CD4-positive, alpha-beta T cell (primary cell): ENCODE measurements at regions of chr2 and their contacts with region 1.

Region 1: GRCh38 chr2:190534310-190535120 is at the start of gene NEMP2:
- DNase-seq: peak; percentile 53 to 91 (median 76)
- ATAC-seq: peak; percentile 59
- H3K4me3 ChIP-seq: peak within 1 kb of the TSS; percentile 77
- H3K4me3 Mint-ChIP-seq: peak within 1 kb of the TSS; percentile 94
- H3K27ac ChIP-seq: peak within 1 kb of the TSS; percentile 87 to 95
- H3K27ac Mint-ChIP-seq: peak within 1 kb of the TSS; percentile 99
- H3K4me1 ChIP-seq: peaks cover 40% of the 10 kb centered on the region
- H3K4me1 Mint-ChIP-seq: peaks cover 73% of the 10 kb centered on the region
- H3K27me3 ChIP-seq: no peaks in the 10 kb centered on the region
- H3K27me3 Mint-ChIP-seq: no peaks in the 10 kb centered on the region
- CTCF ChIP-seq: no peak
- total RNA-seq, gene NEMP2: 11.6 to 12.2 TPM

Region 2: GRCh38 chr2:189927823-189928419 is 606.6 kb before region 1 on chr2:
- CTCF ChIA-PET with region 1: no interaction called
- POLR2A ChIA-PET with region 1: no interaction called
- intact Hi-C with region 1: no loop called
- DNase-seq: no peak
- ATAC-seq: no peak
- H3K4me3 ChIP-seq: no peak overlapping the region
- H3K4me3 Mint-ChIP-seq: no peak overlapping the region
- H3K27ac ChIP-seq: no peak overlapping the region
- H3K27ac Mint-ChIP-seq: no peak overlapping the region
- H3K4me1 ChIP-seq: no peaks in the 10 kb centered on the region
- H3K4me1 Mint-ChIP-seq: no peaks in the 10 kb centered on the region
- H3K27me3 ChIP-seq: no peaks in the 10 kb centered on the region
- H3K27me3 Mint-ChIP-seq: peaks cover 4% of the 10 kb centered on the region
- CTCF ChIP-seq: no peak

Region 3: DNA sequence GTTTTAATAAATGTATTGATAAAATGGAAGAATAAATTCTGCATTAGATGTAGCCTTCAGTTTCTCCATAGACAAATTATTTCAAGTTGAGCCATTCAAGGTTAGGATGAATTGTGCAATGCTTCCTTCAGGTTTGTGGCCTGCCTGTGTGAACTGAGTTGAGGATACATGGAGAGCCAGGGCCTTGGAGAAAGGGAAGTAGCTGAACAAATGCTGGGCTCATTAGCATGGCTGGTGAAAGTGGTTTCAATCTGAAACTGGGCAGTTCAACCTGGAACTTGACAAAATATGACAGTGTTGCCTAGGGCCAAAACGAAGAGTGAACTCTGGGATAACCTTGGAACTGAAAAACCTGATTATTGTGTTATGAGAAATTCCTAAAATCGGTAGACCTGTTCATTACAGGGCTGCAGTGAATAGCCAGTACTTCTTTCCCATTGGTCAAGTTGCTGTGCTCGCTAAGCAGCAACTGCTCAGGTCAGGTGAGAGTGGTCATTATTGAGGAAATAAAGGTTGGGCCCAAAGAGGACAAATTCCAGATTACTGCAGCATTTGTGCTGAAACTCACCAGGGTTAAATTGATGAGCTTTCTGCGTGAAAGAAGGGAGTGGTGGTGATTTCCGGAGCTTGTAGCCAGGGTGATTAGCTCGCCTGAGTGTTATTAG is 178.4 kb before region 1 on chr2:
- CTCF ChIA-PET with region 1: no interaction called
- POLR2A ChIA-PET with region 1: interaction called, 10 read pairs
- intact Hi-C with region 1: no loop called
- DNase-seq: no peak
- ATAC-seq: no peak
- H3K4me3 ChIP-seq: no peak overlapping the region
- H3K4me3 Mint-ChIP-seq: no peak overlapping the region
- H3K27ac ChIP-seq: no peak overlapping the region
- H3K27ac Mint-ChIP-seq: no peak overlapping the region
- H3K4me1 ChIP-seq: peaks cover 3% of the 10 kb centered on the region
- H3K4me1 Mint-ChIP-seq: peaks cover 18% of the 10 kb centered on the region
- H3K27me3 ChIP-seq: no peaks in the 10 kb centered on the region
- H3K27me3 Mint-ChIP-seq: no peaks in the 10 kb centered on the region
- CTCF ChIP-seq: no peak

Region 4: DNA sequence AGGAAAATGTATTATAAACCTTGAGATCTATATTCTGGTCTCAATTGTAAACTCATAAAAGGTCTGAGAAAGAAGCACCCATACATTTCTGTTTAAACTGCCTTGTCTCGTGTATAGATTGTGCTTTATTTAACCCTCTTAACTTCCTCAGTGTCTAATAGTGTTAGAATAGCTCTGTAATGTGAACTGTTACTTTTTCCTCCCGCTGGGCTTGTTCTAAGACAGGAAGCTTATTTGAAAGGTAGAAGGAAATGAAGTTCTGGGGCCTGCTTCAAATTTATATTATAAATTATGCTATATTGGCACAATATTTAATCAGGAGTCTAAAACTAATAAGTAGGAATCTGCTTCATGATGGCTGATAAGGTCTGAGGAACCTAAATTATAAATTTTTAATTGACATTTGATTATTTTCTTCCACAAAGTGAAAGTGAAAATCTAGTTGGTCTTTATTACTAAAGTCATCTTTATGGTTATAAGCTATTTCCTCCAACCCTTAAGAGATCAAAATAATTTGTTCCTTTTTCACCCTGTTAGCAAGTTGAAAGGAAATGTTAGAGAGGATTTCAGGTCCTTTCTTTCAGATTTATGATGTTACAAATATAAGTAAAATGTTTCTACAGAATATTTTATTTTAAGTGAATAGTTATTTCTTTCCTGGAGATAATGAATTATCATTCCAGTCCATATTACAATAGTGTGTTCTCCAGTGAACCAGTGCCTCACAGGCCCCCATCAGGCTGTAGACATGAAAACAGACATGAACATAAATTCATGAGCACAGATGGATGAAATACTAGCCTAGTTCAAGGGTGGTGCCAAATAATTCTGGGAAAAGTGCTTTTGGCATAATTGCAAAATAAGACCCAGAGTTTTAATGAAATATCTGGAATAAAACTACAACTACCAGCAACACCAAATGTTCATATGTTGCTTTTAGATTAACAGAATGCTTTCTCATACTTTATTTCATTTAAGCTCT is 118.4 kb before region 1 on chr2:
- CTCF ChIA-PET with region 1: no interaction called
- POLR2A ChIA-PET with region 1: interaction called, 100 read pairs
- intact Hi-C with region 1: no loop called
- DNase-seq: peak in 2 of 14 experiments; percentile 28 to 48
- ATAC-seq: peak; percentile 71
- H3K4me3 ChIP-seq: no peak overlapping the region
- H3K4me3 Mint-ChIP-seq: peak overlapping the region; percentile 30
- H3K27ac ChIP-seq: peak overlapping the region; percentile 34 to 75
- H3K27ac Mint-ChIP-seq: peak overlapping the region; percentile 78
- H3K4me1 ChIP-seq: peaks cover 30% of the 10 kb centered on the region
- H3K4me1 Mint-ChIP-seq: peaks cover 96% of the 10 kb centered on the region
- H3K27me3 ChIP-seq: no peaks in the 10 kb centered on the region
- H3K27me3 Mint-ChIP-seq: no peaks in the 10 kb centered on the region
- CTCF ChIP-seq: no peak

Region 5: DNA sequence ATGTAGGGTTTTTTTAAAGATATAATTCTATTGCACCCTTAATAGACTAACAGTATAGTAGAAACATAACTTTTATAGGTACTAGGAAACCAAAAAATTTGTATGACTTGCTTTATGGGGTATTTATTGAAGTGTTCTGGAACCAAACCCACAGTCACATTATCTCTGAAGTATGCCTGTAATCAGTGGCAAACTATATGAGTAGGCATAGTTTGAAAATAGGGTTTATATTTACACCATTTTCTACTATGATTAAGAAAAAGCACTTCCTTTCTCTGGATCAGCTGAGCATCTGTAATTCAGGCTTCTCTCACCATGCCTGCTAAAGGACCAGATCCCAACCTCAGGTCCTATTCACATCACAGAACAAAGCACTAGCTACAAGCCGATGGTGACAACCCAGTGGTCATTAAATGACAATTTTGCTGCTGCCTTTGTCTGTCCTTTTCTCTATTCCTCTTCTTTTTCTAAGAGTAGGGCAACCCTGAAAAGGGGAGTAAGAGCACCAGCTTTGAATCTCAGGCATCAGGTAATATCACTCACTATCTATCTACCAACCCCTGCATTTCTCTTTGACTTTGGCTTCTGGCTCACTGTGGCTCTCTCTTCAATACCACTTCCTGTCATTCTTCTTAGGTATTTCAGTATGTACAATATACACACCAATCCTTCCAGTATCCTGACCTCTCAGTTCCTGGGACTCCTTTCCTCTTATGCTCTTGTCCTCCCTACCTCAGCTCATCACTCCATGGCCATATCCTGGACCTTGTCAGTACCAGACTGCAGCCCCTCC is 14.3 kb before region 1 on chr2:
- CTCF ChIA-PET with region 1: no interaction called
- POLR2A ChIA-PET with region 1: interaction called, 49 read pairs
- intact Hi-C with region 1: loop called in 1 of 2 experiments (anchors 2 kb)
- DNase-seq: peak in 2 of 14 experiments; percentile 23 to 58
- ATAC-seq: peak; percentile 82
- H3K4me3 ChIP-seq: no peak overlapping the region
- H3K4me3 Mint-ChIP-seq: peak overlapping the region; percentile 11
- H3K27ac ChIP-seq: peak overlapping the region in 1 of 2 donors; percentile 39
- H3K27ac Mint-ChIP-seq: peak overlapping the region; percentile 37
- H3K4me1 ChIP-seq: peaks cover 27% of the 10 kb centered on the region
- H3K4me1 Mint-ChIP-seq: peaks cover 44% of the 10 kb centered on the region
- H3K27me3 ChIP-seq: no peaks in the 10 kb centered on the region
- H3K27me3 Mint-ChIP-seq: no peaks in the 10 kb centered on the region
- CTCF ChIP-seq: no peak

Region 6: DNA sequence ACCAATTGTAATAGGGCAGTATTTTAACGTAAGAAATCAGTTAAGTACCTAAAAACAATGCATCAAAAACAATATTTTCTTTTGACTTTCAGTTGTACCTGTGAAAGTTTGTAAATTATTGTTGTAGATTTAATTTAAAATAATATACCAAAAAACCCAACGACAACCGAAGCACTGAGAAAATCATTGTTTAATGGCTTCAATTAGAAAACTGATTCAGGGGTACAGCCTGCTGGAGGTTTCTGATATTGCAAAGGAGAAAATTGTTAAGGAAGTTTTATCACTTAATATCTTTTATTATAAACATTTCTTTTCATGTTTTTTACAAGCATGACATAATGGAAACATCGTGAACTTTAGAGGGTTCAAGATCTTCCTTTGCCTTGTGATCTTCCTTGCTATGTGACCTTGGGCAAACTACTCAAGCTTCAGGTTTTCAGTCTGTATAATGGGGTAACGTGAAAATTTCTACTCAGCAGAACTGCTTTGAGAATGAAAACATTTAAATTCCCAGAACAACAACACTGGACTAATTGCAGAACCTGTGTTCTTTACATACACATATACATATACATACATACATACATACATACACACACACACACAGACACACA is 269.8 kb after region 1 on chr2:
- CTCF ChIA-PET with region 1: interaction called, 4 read pairs
- POLR2A ChIA-PET with region 1: no interaction called
- intact Hi-C with region 1: loop called in 1 of 2 experiments (anchors 10 kb)
- DNase-seq: peak in 4 of 14 experiments; percentile 17 to 31 (median 20)
- ATAC-seq: no peak
- H3K4me3 ChIP-seq: no peak overlapping the region
- H3K4me3 Mint-ChIP-seq: no peak overlapping the region
- H3K27ac ChIP-seq: no peak overlapping the region
- H3K27ac Mint-ChIP-seq: no peak overlapping the region
- H3K4me1 ChIP-seq: no peaks in the 10 kb centered on the region
- H3K4me1 Mint-ChIP-seq: no peaks in the 10 kb centered on the region
- H3K27me3 ChIP-seq: no peaks in the 10 kb centered on the region
- H3K27me3 Mint-ChIP-seq: no peaks in the 10 kb centered on the region
- CTCF ChIP-seq: peak; percentile 55